Dendritic cell treated with granulocyte-macrophage colony-stimulating factor and Interleukin-4, amounts not matched to agents 40 ng/mL and 50 ng/mL, for 4 days (primary cell): ENCODE measurements at regions of chrX and their contacts with region 1.

Region 1: DNA sequence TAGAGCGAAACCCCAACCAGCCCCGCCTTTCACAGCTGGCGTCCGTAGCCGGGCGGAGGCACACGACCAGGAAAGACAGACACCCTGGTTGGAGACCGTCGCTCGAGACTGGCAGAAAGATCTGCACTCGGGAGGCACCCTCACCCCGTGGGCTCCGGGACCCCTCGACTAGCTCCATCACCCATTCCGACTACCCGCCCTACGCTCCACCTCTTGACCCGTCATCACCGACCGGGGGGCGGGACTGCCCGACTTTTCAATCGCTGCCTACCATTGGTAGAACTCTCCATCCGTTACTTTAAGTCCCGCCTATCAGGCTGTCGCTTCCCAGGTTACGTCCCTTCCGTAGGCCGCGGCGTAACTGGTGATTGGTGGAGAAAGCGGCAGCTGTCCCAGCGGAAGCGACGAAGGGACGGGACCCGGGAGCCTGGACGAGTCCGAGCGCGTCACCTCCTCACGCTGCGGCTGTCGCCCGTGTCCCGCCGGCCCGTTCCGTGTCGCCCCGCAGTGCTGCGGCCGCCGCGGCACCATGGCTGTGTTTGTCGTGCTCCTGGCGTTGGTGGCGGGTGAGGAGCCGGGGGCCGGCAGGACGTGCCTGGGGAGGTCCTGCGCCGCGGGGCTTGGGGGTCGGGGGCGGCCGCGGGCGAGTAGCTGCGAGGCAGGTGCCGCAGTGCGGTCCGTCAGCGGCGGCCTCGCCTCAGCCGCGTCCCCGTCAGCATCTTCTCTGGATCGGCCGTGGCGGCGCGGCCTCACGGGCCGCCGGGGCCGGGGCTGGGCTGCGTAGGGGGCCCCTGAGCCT is at the start of gene ATP6AP2:
- H3K4me3 Mint-ChIP-seq: peak within 1 kb of the TSS; percentile 89
- H3K27ac Mint-ChIP-seq: peak within 1 kb of the TSS; percentile 89
- H3K4me1 Mint-ChIP-seq: peaks cover 33% of the 10 kb centered on the region
- H3K27me3 Mint-ChIP-seq: no peaks in the 10 kb centered on the region

Region 2: DNA sequence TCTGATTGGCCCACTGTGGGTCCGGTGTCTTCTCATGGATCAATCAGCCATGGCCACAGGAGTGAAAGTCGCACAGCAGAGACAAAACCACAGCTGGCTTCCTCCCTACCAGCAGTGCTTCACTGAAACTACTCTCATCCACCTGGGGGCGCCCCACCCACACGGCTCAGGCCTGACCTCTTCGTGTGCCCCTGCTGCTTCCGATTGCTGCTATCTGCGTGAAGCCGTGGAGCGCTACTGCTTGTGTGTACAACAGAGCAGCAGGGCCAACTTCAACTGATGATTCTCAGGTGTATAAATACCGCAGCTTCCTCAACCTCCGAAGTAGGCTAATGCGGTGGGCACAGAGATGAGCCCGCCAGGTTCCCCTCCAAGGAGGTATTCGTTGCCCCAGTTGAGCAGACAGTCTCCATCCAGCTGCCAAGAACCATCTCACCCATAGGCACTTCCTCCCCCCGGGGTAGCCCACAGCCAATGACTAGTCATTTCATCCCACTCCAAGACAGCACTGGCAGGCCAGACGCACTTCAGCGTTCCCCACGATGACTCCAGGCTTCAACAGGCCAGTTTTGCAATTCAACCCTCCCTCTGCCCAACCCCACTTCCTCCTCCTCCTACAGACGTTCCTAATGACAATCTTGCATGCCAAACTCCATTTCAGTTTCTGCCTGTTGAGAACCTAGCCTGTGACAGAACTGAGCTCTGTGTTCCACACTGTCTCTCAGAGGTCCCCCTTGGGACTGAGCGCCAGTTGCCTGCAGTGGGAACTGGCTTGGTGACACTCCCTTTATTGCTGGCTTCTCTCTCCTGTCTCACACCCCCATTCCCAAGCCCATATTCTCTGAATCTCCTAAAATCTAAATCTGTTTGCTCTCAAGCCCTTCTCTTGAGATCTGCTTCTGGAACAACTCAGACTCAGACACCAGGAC is 41.3 kb before region 1 on chrX:
- intact Hi-C with region 1: loop called (anchors 5 kb)
- H3K4me3 Mint-ChIP-seq: peak overlapping the region; percentile 42
- H3K27ac Mint-ChIP-seq: peak overlapping the region; percentile 88
- H3K4me1 Mint-ChIP-seq: peaks cover 45% of the 10 kb centered on the region
- H3K27me3 Mint-ChIP-seq: peaks cover 2% of the 10 kb centered on the region

Region 3: GRCh38 chrX:40570346-40571093 is 10.2 kb before region 1 on chrX:
- intact Hi-C with region 1: loop called (anchors 1 kb)
- H3K4me3 Mint-ChIP-seq: peak overlapping the region; percentile 67
- H3K27ac Mint-ChIP-seq: peak overlapping the region; percentile 90
- H3K4me1 Mint-ChIP-seq: peaks cover 25% of the 10 kb centered on the region
- H3K27me3 Mint-ChIP-seq: no peaks in the 10 kb centered on the region

Region 4: GRCh38 chrX:40647307-40648197 is 66.8 kb after region 1 on chrX and contains the start of gene CXorf38:
- intact Hi-C with region 1: loop called (anchors 1 kb)
- H3K4me3 Mint-ChIP-seq: peak within 1 kb of the TSS; percentile 93
- H3K27ac Mint-ChIP-seq: peak within 1 kb of the TSS; percentile 95
- H3K4me1 Mint-ChIP-seq: peaks cover 18% of the 10 kb centered on the region
- H3K27me3 Mint-ChIP-seq: no peaks in the 10 kb centered on the region

Region 5: DNA sequence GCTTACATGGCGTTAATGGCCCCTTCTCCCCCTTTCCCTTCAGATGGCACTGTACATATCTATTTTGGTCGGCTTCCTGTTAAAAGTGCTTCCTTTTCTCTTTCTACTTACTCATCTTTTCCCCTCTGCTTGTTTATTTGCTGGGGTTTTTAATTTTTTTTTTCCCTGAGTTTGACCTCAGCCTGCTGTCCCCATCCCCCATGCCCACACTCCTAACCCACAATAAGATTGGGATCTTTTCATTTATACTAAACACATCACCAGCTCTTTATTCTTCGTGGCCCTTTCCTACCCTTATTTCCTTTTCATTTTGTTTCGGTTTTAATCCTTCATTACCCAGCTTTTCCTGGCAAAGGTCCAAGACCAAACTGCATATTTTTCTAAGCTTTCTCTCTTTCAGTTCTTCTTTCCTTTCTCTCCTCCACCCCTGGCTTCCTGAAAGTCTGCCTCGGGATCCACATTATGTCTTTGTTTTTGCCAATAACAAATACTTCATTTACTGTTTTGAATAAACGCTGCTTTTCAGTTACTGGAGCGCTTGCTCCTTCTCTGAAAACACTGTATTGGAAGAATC is 352.5 kb after region 1 on chrX:
- intact Hi-C with region 1: no loop called
- H3K4me3 Mint-ChIP-seq: peak overlapping the region; percentile 76
- H3K27ac Mint-ChIP-seq: peak overlapping the region; percentile 97
- H3K4me1 Mint-ChIP-seq: peaks cover 40% of the 10 kb centered on the region
- H3K27me3 Mint-ChIP-seq: no peaks in the 10 kb centered on the region